Heart left ventricle (tissue), 16 donors: ENCODE measurements at regions of chr12 and their contacts with region 1.

Region 1: GRCh38 chr12:2944401-2945047 is 14.7 kb upstream of the TEAD4 start:
- DNase-seq: peak in 3 of 5 donors; percentile 35 to 49 (median 37)
- ATAC-seq: peak; percentile 64 to 79 (median 72)
- H3K4me3 ChIP-seq: peak overlapping the region in 2 of 12 donors; percentile 5 to 13
- H3K27ac ChIP-seq: no peak overlapping the region
- H3K4me1 ChIP-seq: peaks cover 0 to 10% (median 7%) of the 10 kb centered on the region in 12 donors
- H3K27me3 ChIP-seq: no peaks in the 10 kb centered on the region
- CTCF ChIP-seq: peak; percentile 50 to 72 (median 66)
- POLR2A ChIP-seq: no peak

Region 2: GRCh38 chr12:2652401-2653081 is 292.0 kb before region 1 on chr12:
- intact Hi-C with region 1: no loop called
- DNase-seq: no peak
- ATAC-seq: peak in 1 of 4 donors; percentile 14
- H3K4me3 ChIP-seq: no peak overlapping the region
- H3K27ac ChIP-seq: no peak overlapping the region
- H3K4me1 ChIP-seq: peaks cover 0 to 9% (median 0%) of the 10 kb centered on the region in 12 donors
- H3K27me3 ChIP-seq: no peaks in the 10 kb centered on the region
- CTCF ChIP-seq: no peak
- POLR2A ChIP-seq: no peak

Region 3: GRCh38 chr12:2719392-2719791 is 225.1 kb before region 1 on chr12:
- intact Hi-C with region 1: no loop called
- DNase-seq: no peak
- ATAC-seq: no peak
- H3K4me3 ChIP-seq: no peak overlapping the region
- H3K27ac ChIP-seq: no peak overlapping the region
- H3K4me1 ChIP-seq: no peaks in the 10 kb centered on the region
- H3K27me3 ChIP-seq: peaks cover 0 to 17% (median 0%) of the 10 kb centered on the region in 9 donors
- CTCF ChIP-seq: no peak
- POLR2A ChIP-seq: no peak

Region 4: DNA sequence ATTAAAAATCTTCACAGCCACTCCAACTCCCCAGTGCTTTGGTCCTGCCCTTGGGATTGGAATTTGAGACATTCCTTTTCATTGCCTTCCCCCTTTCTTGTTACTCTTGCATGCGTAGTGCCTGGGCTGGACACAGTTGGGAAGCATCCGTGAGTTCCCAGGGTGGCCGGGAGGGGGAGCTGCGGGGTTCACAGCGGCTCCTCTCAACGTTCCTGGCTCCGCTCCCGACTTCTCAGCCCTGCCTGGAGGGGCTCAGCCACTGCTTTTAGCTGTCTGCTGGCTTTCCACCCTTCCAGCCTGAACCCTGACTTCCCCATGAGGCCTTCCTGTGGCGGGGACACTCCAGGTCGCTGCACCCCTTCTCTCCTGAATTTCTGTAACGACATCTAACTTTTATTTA is 90.9 kb before region 1 on chr12:
- intact Hi-C with region 1: loop called in 6 of 10 experiments (anchors 5 to 10 kb)
- DNase-seq: peak; percentile 84 to 90 (median 85)
- ATAC-seq: peak; percentile 68 to 95 (median 90)
- H3K4me3 ChIP-seq: no peak overlapping the region
- H3K27ac ChIP-seq: no peak overlapping the region
- H3K4me1 ChIP-seq: peaks cover 0 to 3% (median 0%) of the 10 kb centered on the region in 12 donors
- H3K27me3 ChIP-seq: no peaks in the 10 kb centered on the region
- CTCF ChIP-seq: peak; percentile 72 to 92 (median 81)
- POLR2A ChIP-seq: no peak

Region 5: GRCh38 chr12:2877047-2877952 is 67.2 kb before region 1 on chr12 and contains the starts of genes FOXM1 and RHNO1:
- intact Hi-C with region 1: loop called in 3 of 10 experiments (anchors 10 kb)
- DNase-seq: peak; percentile 90 to 95 (median 91)
- ATAC-seq: peak; percentile 84 to 97 (median 96)
- H3K4me3 ChIP-seq: peak within 1 kb of the TSS; percentile 72 to 99 (median 86)
- H3K27ac ChIP-seq: peak within 1 kb of the TSS; percentile 31 to 93 (median 83)
- H3K4me1 ChIP-seq: peaks cover 0 to 33% (median 16%) of the 10 kb centered on the region in 12 donors
- H3K27me3 ChIP-seq: no peaks in the 10 kb centered on the region
- CTCF ChIP-seq: peak in 6 of 12 donors; percentile 8 to 43 (median 31)
- POLR2A ChIP-seq: peak in 1 of 2 donors; percentile 24
- total RNA-seq, gene FOXM1: 0.09 to 13.5 (median 0.68) TPM
- total RNA-seq, gene RHNO1: 3.1 to 15.0 (median 5.7) TPM

Region 6: DNA sequence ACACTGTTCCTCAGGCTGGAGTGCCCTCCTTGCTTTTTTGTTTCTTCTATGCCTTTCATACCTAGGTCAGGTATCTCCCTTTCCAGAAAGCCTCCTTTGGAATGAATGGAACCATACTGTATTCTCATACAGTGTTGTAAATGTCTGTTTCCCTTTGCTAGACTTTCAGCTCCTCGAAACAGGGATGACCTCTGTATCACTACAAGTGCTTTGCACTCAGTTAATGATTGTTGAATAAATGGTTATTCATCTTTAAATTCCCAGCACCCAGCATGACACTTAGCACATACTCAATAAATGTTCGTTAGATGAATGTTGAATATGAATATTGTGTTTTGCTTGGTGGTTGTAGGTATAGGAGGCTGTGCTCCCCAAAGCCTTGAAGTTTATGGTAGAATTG is 59.7 kb before region 1 on chr12:
- intact Hi-C with region 1: loop called in 6 of 10 experiments (anchors 5 to 10 kb)
- DNase-seq: no peak
- ATAC-seq: no peak
- H3K4me3 ChIP-seq: no peak overlapping the region
- H3K27ac ChIP-seq: no peak overlapping the region
- H3K4me1 ChIP-seq: peaks cover 0 to 2% (median 0%) of the 10 kb centered on the region in 12 donors
- H3K27me3 ChIP-seq: no peaks in the 10 kb centered on the region
- CTCF ChIP-seq: no peak
- POLR2A ChIP-seq: no peak

Region 7: GRCh38 chr12:2890388-2891239 is 53.9 kb before region 1 on chr12 and contains the start of gene TULP3:
- intact Hi-C with region 1: loop called in 6 of 10 experiments (anchors 5 to 10 kb)
- DNase-seq: peak; percentile 99
- ATAC-seq: peak; percentile 99 to 100 (median 99)
- H3K4me3 ChIP-seq: peak within 1 kb of the TSS; percentile 62 to 97 (median 86)
- H3K27ac ChIP-seq: peak within 1 kb of the TSS; percentile 75 to 98 (median 89)
- H3K4me1 ChIP-seq: peaks cover 0 to 28% (median 11%) of the 10 kb centered on the region in 12 donors
- H3K27me3 ChIP-seq: no peaks in the 10 kb centered on the region
- CTCF ChIP-seq: peak in 4 of 12 donors; percentile 22 to 36 (median 30)
- POLR2A ChIP-seq: peak in 1 of 2 donors; percentile 85
- total RNA-seq, gene TULP3: 3.5 to 10.0 (median 5.3) TPM

Region 8: GRCh38 chr12:2988494-2988893 is 44.0 kb after region 1 on chr12:
- intact Hi-C with region 1: no loop called
- DNase-seq: no peak
- ATAC-seq: no peak
- H3K4me3 ChIP-seq: no peak overlapping the region
- H3K27ac ChIP-seq: no peak overlapping the region
- H3K4me1 ChIP-seq: peaks cover 0 to 7% (median 0%) of the 10 kb centered on the region in 12 donors
- H3K27me3 ChIP-seq: no peaks in the 10 kb centered on the region
- CTCF ChIP-seq: no peak
- POLR2A ChIP-seq: no peak

Region 9: DNA sequence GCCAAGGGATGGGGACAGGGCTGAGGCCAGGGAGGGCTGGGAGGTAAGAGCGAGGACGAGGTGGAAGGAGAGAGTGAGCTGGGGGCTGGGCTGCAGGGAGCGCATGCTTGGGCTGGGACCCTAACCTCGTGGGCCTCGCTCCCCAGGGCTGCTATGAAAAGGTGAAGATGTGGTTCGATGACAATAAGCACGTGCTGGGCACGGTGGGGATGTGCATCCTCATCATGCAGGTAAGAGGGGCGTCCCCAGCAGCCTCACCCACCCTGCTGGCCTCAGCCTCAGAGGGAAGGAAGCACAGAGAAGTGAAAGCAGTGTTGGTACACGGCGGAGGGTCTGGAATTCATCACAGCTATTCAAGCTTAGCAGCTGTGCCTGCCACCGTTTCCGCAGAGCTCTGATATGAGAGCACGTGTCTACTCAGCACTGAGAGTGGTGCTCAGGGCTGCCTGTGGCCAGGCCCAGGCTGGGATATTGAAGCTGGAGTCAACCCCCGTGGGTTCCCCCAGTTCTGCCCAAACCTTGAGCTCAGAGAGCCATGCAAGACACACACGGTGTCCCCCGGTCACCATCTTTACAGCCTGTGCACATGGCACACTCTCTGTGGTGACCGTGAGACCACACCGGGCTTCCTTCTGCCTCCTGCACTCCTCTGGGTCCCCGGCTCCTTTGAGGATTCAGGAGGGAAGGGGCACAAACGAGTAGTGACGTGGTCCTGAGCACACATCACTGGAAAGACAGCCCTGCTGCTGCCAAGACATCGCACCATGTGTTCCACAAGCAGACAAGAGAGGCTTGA is 337.3 kb after region 1 on chr12:
- intact Hi-C with region 1: no loop called
- DNase-seq: peak in 3 of 5 donors; percentile 51 to 77 (median 63)
- ATAC-seq: peak; percentile 68 to 86 (median 72)
- H3K4me3 ChIP-seq: no peak overlapping the region
- H3K27ac ChIP-seq: peak overlapping the region in 4 of 12 donors; percentile 30 to 80 (median 45)
- H3K4me1 ChIP-seq: peaks cover 0 to 62% (median 15%) of the 10 kb centered on the region in 12 donors
- H3K27me3 ChIP-seq: no peaks in the 10 kb centered on the region
- CTCF ChIP-seq: no peak
- POLR2A ChIP-seq: no peak